ENCODE measurements at regions of chr10 and their contacts with region 1.

Region 1: DNA sequence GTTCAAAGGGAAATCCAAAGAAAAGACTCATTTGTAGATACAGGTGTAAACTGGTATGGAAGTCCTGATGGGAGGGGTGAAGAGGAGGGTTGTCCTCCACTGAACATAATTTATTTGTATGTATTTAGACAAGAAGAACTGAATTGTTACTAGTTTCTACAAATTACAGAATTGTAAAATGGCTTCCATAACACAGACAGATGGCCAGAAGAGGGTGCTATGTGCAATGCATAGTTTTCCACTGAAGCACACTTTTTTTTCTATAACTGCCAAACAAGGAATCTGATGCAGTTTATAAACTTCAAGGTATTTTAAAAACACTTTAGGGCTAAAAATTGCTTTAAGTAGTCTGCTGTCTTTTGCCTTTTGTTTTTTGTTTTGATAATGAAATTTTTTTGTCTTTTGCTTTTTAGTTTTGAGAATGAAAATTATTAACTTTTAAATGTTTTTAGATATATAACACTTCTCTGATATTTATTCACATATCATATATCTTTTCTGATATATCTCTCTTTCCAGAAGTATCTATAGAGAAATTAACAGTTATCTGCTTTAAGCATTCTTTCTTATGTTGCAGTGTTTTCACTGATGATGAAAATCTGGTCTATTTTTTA is 58.5 kb downstream of the PHYHIPL start:
- DNase-seq: no peak
- ATAC-seq: no peak

Region 2: GRCh38 chr10:59580026-59580863 is 345.3 kb after region 1 on chr10:
- intact Hi-C with region 1: loop called (anchors 5 kb)
- DNase-seq: no peak
- ATAC-seq: peak; percentile 76

Region 3: GRCh38 chr10:59830601-59831259 is 595.8 kb after region 1 on chr10:
- intact Hi-C with region 1: loop called (anchors 10 kb)
- DNase-seq: no peak
- ATAC-seq: peak; percentile 74

Measured in Right ventricle myocardium superior (tissue), 1 donor.